ENCODE measurements at regions of chr10 and their contacts with region 1.

Region 1: GRCh38 chr10:72889391-72889831 is 4.1 kb upstream of the OIT3 start:
- DNase-seq: peak; percentile 98
- H3K4me3 Mint-ChIP-seq: no peak overlapping the region
- H3K27ac Mint-ChIP-seq: peak overlapping the region; percentile 26
- H3K4me1 Mint-ChIP-seq: peaks cover 17% of the 10 kb centered on the region
- H3K27me3 Mint-ChIP-seq: no peaks in the 10 kb centered on the region
- CTCF ChIP-seq: no peak

Region 2: GRCh38 chr10:73044378-73045285 is 155.2 kb after region 1 on chr10:
- CTCF ChIA-PET with region 1: no interaction called
- POLR2A ChIA-PET with region 1: interaction called, 3 read pairs
- intact Hi-C with region 1: loop called (anchors 10 kb)
- DNase-seq: peak; percentile 89
- H3K4me3 Mint-ChIP-seq: peak overlapping the region; percentile 33
- H3K27ac Mint-ChIP-seq: peak overlapping the region; percentile 75
- H3K4me1 Mint-ChIP-seq: peaks cover 21% of the 10 kb centered on the region
- H3K27me3 Mint-ChIP-seq: no peaks in the 10 kb centered on the region
- CTCF ChIP-seq: no peak